Pancreas (tissue), 10 donors: ENCODE measurements at regions of chr1 and their contacts with region 1.

Region 1: GRCh38 chr1:24027838-24028468 is 47.8 kb upstream of the SRSF10 start:
- DNase-seq: no peak
- ATAC-seq: peak; percentile 82 to 92 (median 88)
- H3K4me3 ChIP-seq: no peak overlapping the region
- H3K27ac ChIP-seq: no peak overlapping the region
- H3K4me1 ChIP-seq: no peaks in the 10 kb centered on the region
- H3K27me3 ChIP-seq: no peaks in the 10 kb centered on the region
- CTCF ChIP-seq: peak in 3 of 4 donors; percentile 24 to 47 (median 31)

Region 2: GRCh38 chr1:23959041-23959460 is 68.9 kb before region 1 on chr1:
- intact Hi-C with region 1: loop called in 2 of 3 experiments (anchors 10 kb)
- DNase-seq: peak in 5 of 6 donors; percentile 65 to 85 (median 72)
- ATAC-seq: peak; percentile 38 to 70 (median 62)
- H3K4me3 ChIP-seq: peak overlapping the region; percentile 53 to 70 (median 62)
- H3K27ac ChIP-seq: peak overlapping the region; percentile 94 to 99 (median 98)
- H3K4me1 ChIP-seq: peaks cover 30 to 56% (median 36%) of the 10 kb centered on the region in 3 donors
- H3K27me3 ChIP-seq: no peaks in the 10 kb centered on the region
- CTCF ChIP-seq: no peak

Region 3: GRCh38 chr1:23979878-23980724 is 47.9 kb before region 1 on chr1 and contains the start of gene SRSF10:
- intact Hi-C with region 1: no loop called
- DNase-seq: peak; percentile 96 to 99 (median 98)
- ATAC-seq: peak; percentile 96 to 99 (median 98)
- H3K4me3 ChIP-seq: peak within 1 kb of the TSS; percentile 84 to 98 (median 90)
- H3K27ac ChIP-seq: peak within 1 kb of the TSS; percentile 86 to 97 (median 89)
- H3K4me1 ChIP-seq: peaks cover 18 to 34% (median 23%) of the 10 kb centered on the region in 3 donors
- H3K27me3 ChIP-seq: no peaks in the 10 kb centered on the region
- CTCF ChIP-seq: no peak
- total RNA-seq, gene SRSF10: 25.5 to 54.9 (median 37.1) TPM

Region 4: DNA sequence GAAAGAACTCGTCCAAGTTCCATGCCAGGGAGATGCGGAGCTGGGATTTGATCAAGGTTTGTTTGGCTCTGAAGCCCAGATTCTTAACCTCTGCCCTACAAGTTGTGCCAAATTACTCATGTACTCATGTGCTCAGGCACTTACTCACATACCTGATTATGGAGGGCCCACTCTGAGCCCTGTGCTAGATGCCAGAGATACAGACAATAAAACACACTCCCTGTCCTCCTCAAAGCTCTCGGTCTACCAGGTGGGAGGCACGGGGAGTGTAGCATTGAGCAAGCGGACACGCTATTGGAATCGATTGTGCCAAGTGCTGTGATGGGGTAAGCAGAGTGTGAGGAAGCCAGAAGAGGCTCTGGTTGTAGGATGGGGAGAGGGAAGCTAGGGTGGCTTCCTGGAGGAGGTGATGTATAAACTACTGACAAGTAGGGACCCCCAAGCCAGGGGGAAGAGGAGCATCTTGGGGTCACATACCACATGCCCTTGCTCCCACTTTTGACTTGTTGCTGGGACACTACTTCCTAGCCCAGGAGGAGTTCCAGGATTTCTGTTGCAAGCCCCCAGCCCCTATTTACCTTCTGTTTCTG is 208.9 kb after region 1 on chr1:
- intact Hi-C with region 1: no loop called
- DNase-seq: no peak
- ATAC-seq: peak; percentile 39 to 61 (median 52)
- H3K4me3 ChIP-seq: no peak overlapping the region
- H3K27ac ChIP-seq: no peak overlapping the region
- H3K4me1 ChIP-seq: no peaks in the 10 kb centered on the region
- H3K27me3 ChIP-seq: no peaks in the 10 kb centered on the region
- CTCF ChIP-seq: no peak